K562 (cell line): ENCODE measurements at regions of chr5 and their contacts with region 1.

Region 1: DNA sequence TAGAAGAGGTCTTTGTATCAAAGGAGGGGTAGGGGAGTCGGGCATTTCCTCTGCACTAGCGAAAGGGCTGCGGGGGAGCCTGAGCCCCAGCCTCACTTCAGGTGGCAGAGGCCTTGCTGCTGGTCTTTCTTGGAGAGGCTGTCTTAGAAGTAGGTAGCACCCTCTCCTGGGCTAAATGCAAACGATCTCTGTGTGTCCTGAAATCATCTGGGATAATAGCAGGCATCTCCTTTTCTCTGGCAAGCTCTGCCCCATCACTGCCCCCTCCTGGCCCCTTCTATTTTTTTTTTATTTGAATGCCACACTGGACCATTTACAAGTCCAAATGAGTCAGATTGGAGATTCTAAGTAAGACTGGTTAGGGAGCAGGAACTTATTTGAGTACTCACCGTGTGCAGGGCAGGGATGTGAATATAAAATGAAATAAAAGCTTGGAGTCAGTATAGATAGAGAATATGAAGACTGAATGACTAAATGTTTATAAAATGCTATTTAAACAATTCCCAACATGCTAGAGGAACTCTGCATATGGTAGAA is 137.1 kb downstream of the FGF1 start:
- DNase-seq: peak; percentile 74 to 80 (median 76)
- ATAC-seq: peak; percentile 99
- H3K4me3 ChIP-seq: no peak overlapping the region
- H3K27ac ChIP-seq: no peak overlapping the region
- H3K4me1 ChIP-seq: peaks cover 3 to 6% of the 10 kb centered on the region in 2 experiments; a peak in 3 of 5 replicates
- H3K27me3 ChIP-seq: peaks cover 0 to 22% of the 10 kb centered on the region in 2 experiments; a peak in 3 of 5 replicates
- CTCF ChIP-seq: peak; percentile 83 to 98 (median 96)
- EP300 ChIP-seq: no peak
- POLR2A ChIP-seq: no peak
- RAD21 ChIP-seq: peak; percentile 98

Region 2: GRCh38 chr5:142151436-142152383 is 397.1 kb before region 1 on chr5:
- CTCF ChIA-PET with region 1: interaction called, 72 read pairs
- POLR2A ChIA-PET with region 1: interaction called, 3 read pairs
- in situ Hi-C with region 1: no loop called
- intact Hi-C with region 1: loop called (anchors 1 kb)
- DNase-seq: peak; percentile 50 to 76 (median 60)
- ATAC-seq: peak; percentile 85
- H3K4me3 ChIP-seq: no peak overlapping the region
- H3K27ac ChIP-seq: no peak overlapping the region
- H3K4me1 ChIP-seq: no peaks in the 10 kb centered on the region
- H3K27me3 ChIP-seq: no peaks in the 10 kb centered on the region
- CTCF ChIP-seq: peak; percentile 63 to 93 (median 66); a peak in 5 of 6 replicates
- EP300 ChIP-seq: no peak
- POLR2A ChIP-seq: no peak
- RAD21 ChIP-seq: peak; percentile 92 to 93

Region 3: DNA sequence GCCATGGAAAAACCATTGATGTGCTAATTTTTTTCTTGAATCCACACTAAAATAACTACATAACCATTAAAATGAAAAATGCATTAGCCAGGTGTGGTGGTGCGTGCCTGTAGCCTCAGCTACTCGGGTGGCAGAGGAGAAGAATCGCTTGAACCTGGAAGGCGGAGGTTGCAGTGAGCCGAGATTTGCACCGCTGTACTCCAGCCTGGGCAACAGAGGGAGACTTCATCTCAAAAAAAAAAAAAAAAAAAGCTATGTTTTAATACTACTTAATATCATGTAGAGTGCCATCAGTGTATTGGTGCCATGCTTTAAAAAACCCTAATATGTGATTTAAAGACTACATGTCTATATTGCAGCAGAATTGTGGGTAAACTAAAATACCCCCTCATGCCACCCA is 381.3 kb before region 1 on chr5:
- CTCF ChIA-PET with region 1: interaction called, 4 read pairs
- POLR2A ChIA-PET with region 1: no interaction called
- in situ Hi-C with region 1: loop called (anchors 5 kb)
- intact Hi-C with region 1: no loop called
- DNase-seq: no peak
- ATAC-seq: no peak
- H3K4me3 ChIP-seq: no peak overlapping the region
- H3K27ac ChIP-seq: no peak overlapping the region
- H3K4me1 ChIP-seq: peaks cover 0 to 4% of the 10 kb centered on the region in 2 experiments; a peak in 2 of 5 replicates
- H3K27me3 ChIP-seq: peaks cover 14 to 31% of the 10 kb centered on the region in 2 experiments
- CTCF ChIP-seq: no peak
- EP300 ChIP-seq: no peak
- POLR2A ChIP-seq: no peak
- RAD21 ChIP-seq: no peak

Region 4: DNA sequence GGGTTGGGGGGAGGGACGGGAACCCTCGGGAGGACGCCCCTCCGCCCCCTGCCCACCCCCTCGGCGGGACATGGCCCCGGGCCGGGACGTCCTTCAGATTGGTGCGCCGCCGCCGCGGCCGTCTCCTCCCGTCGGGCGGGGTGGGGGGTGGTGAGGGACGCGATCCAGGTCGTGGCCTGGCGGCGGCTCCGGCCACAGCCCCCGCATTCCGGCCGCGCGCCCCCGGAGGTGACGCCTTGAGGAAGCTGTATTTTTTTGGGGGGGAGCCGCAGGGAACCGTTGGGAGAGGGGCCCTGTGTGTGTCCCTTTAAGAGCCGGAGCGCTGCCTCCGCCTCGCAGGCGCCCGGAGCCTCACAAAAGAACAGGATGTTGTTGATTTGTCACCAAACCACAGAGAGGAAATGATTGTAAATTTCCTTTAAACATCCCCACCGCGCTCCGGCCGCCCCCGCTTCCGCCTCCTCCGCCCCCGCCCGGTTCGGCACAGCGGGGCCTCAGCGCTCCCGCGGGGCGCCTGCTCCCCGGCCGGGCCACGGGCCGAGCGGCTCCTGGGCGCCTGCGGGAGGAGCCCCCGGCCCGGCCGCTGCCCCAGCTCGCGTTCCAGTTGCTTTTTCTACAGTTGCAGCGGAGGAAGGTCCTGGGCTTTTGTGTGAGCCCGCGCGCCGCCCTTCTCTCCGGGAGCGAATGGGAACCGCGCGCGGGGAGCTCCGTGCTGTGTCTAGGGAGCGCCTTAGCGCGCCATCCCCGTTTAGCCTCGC is 191.9 kb before region 1 on chr5:
- CTCF ChIA-PET with region 1: no interaction called
- POLR2A ChIA-PET with region 1: interaction called, 3 read pairs
- in situ Hi-C with region 1: no loop called
- intact Hi-C with region 1: loop called (anchors 10 kb)
- DNase-seq: peak; percentile 85 to 93 (median 88)
- ATAC-seq: peak; percentile 91
- H3K4me3 ChIP-seq: peak overlapping the region; percentile 56
- H3K27ac ChIP-seq: peak overlapping the region; percentile 90
- H3K4me1 ChIP-seq: peaks cover 19 to 32% of the 10 kb centered on the region in 2 experiments
- H3K27me3 ChIP-seq: no peaks in the 10 kb centered on the region; a peak in 1 of 5 replicates
- CTCF ChIP-seq: no peak
- EP300 ChIP-seq: peak; percentile 95
- POLR2A ChIP-seq: peak; percentile 70
- RAD21 ChIP-seq: peak in 1 of 2 experiments; percentile 43

Region 5: GRCh38 chr5:142446131-142446959 is 102.5 kb before region 1 on chr5:
- CTCF ChIA-PET with region 1: no interaction called
- POLR2A ChIA-PET with region 1: no interaction called
- in situ Hi-C with region 1: no loop called
- intact Hi-C with region 1: loop called (anchors 10 kb)
- DNase-seq: peak in 2 of 4 experiments; percentile 26 to 83
- ATAC-seq: peak; percentile 63
- H3K4me3 ChIP-seq: no peak overlapping the region
- H3K27ac ChIP-seq: peak overlapping the region; percentile 79
- H3K4me1 ChIP-seq: peaks cover 5 to 27% of the 10 kb centered on the region in 2 experiments
- H3K27me3 ChIP-seq: no peaks in the 10 kb centered on the region
- CTCF ChIP-seq: no peak
- EP300 ChIP-seq: peak; percentile 32; the same call in 1 of the 2 replicates
- POLR2A ChIP-seq: peak; percentile 37; the same call in 1 of the 2 replicates
- RAD21 ChIP-seq: no peak; a peak in 1 of 4 replicates